Activated T-helper 2 cell treated with anti-CD3 and anti-CD28 coated beads, Interferon-gamma antibody, Interleukin-2, Interleukin-4, amounts not matched to agents 10 μg/mL and 5 μg/mL and 100 μg/mL, durations not matched to agents 14 hours and 24 hours and 36 hours (primary cell): ENCODE measurements at regions of chr3 and their contacts with region 1.

Region 1: GRCh38 chr3:133573054-133573628 is 345 bp upstream of the CDV3 start:
- DNase-seq: peak; percentile 100
- H3K4me3 Mint-ChIP-seq: peak overlapping the region; percentile 89
- H3K27ac Mint-ChIP-seq: peak overlapping the region; percentile 100
- H3K4me1 Mint-ChIP-seq: peaks cover 40% of the 10 kb centered on the region
- H3K27me3 Mint-ChIP-seq: no peaks in the 10 kb centered on the region

Region 2: DNA sequence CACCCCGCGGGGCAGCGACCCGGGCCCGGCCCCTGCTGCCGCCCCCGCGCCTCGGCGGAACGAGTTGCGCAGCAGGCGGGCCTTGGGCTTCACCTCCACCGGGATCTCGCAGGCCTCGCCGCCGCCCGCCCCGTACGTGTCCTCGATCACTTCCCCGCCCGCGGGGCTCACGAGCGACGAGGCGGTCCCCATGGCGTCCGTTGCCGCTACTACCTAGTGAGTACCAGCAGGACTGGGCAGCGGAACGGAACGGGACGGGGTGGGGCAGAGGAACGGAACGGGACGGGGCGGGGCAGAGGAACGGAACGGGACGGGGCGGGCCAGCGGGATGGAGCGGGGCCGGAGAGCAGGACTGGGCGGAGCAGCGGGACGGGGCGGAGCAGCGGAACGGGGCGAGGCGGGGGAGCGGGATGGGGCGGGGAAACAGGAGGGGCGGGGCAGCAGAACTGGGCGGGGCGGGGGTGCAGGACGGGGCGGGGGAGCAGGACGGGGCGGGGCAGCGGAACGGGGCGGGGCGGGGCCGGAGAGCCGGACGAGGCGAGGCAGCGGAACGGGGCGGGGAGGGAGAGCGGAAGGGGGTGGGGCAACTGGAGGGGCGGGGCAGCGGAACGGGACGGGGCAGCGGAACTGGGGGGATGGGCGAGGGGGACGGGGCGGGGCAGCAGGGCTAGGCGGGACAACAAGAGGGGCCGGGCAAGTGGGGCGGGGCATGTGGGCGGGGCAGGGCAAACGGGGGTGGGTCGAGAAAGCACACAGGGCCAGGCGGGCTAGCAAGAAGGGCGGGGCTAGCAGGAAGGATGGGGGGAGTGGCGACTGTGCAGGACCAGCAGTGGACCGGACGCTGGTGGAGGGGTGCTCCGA is 850.7 kb before region 1 on chr3 and contains the start of gene NPHP3:
- intact Hi-C with region 1: loop called (anchors 1 kb)
- DNase-seq: peak; percentile 87
- H3K4me3 Mint-ChIP-seq: peak within 1 kb of the TSS; percentile 91
- H3K27ac Mint-ChIP-seq: peak within 1 kb of the TSS; percentile 87
- H3K4me1 Mint-ChIP-seq: peaks cover 30% of the 10 kb centered on the region
- H3K27me3 Mint-ChIP-seq: no peaks in the 10 kb centered on the region
- total RNA-seq, gene NPHP3: 16.1 and 20.5 TPM in 2 replicates

Region 3: GRCh38 chr3:133448478-133449122 is 124.5 kb before region 1 on chr3:
- intact Hi-C with region 1: loop called (anchors 1 kb)
- DNase-seq: peak; percentile 34
- H3K4me3 Mint-ChIP-seq: peak overlapping the region; percentile 39
- H3K27ac Mint-ChIP-seq: peak overlapping the region; percentile 76
- H3K4me1 Mint-ChIP-seq: peaks cover 35% of the 10 kb centered on the region
- H3K27me3 Mint-ChIP-seq: no peaks in the 10 kb centered on the region

Region 4: DNA sequence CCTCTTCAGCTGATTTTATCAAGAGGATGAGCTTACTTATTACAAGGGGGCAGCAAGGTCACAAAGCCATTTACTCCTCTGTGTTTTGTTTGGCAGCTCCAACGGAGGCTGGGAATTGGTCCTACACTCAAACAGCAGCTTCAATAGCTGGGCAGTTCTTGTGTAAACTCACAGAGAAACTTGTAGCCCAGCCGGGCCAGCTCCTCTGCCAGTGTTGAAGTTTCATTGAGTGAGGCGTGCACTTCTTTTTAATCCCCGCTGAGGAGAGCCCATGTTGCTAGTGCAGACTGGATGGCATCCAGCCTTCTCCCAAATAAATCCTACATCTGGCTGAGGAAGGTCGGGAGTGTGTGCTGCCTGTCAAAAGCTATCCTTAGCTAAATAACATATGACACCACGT is 113.7 kb before region 1 on chr3:
- intact Hi-C with region 1: no loop called
- DNase-seq: no peak
- H3K4me3 Mint-ChIP-seq: no peak overlapping the region
- H3K27ac Mint-ChIP-seq: no peak overlapping the region
- H3K4me1 Mint-ChIP-seq: peaks cover 30% of the 10 kb centered on the region
- H3K27me3 Mint-ChIP-seq: no peaks in the 10 kb centered on the region

Region 5: DNA sequence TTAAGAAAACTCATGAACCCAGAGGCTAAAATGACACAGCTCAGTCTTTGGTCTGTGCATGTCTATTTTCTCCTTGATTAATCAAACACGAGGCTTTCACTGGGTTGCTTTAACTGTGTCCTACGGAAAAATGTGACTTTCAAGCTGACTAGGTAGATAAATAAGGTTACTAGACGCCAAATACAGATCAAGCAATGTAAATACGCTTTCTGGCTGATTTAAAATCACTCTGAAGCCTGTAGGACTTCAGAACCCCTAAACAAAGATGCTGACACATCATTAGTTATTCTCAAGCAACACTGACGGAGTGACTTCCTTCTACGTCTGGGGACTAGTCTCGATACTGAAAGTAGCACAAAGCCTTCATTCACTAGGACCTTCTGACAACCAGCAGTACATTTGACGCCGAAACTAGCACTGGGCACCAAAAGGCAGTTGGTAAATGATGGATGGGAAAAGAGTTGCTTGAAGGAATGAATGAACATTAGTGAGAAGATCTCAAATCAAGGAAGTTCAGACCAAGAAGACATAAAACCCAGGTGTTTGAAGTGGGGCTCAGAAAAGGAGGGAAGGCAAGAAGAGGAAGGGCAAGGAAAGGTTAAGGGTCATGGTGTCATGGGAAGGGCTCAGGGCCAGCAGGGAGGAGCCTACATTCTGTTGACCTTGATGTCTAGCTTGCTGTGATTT is 66.8 kb before region 1 on chr3:
- intact Hi-C with region 1: loop called (anchors 1 kb)
- DNase-seq: peak; percentile 35
- H3K4me3 Mint-ChIP-seq: peak overlapping the region; percentile 35
- H3K27ac Mint-ChIP-seq: peak overlapping the region; percentile 89
- H3K4me1 Mint-ChIP-seq: peaks cover 19% of the 10 kb centered on the region
- H3K27me3 Mint-ChIP-seq: no peaks in the 10 kb centered on the region

Region 6: DNA sequence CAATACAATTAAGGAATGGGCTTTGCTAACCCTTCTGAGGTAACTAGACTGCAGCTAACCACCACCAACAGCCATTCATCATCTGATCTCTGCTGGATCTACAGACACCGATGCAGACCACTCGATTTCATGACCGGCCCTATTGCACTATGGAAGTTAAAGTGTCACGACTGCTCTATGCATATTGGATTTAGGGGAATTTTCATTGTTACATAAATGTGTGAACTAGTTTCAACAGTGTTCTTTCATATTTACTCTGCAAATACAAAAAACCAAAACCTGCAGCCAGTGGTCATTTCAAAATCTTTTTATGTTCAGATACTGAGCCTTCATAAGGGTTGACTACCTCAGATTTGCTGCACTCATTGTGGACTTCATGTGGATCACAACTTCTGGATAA is 14.9 kb after region 1 on chr3:
- intact Hi-C with region 1: no loop called
- DNase-seq: no peak
- H3K4me3 Mint-ChIP-seq: no peak overlapping the region
- H3K27ac Mint-ChIP-seq: no peak overlapping the region
- H3K4me1 Mint-ChIP-seq: peaks cover 20% of the 10 kb centered on the region
- H3K27me3 Mint-ChIP-seq: no peaks in the 10 kb centered on the region

Region 7: GRCh38 chr3:133661454-133662277 is 88.5 kb after region 1 on chr3 and contains the start of gene TOPBP1:
- intact Hi-C with region 1: loop called (anchors 1 kb)
- DNase-seq: peak; percentile 86
- H3K4me3 Mint-ChIP-seq: peak within 1 kb of the TSS; percentile 99
- H3K27ac Mint-ChIP-seq: peak within 1 kb of the TSS; percentile 97
- H3K4me1 Mint-ChIP-seq: peaks cover 33% of the 10 kb centered on the region
- H3K27me3 Mint-ChIP-seq: no peaks in the 10 kb centered on the region
- total RNA-seq, gene TOPBP1: 90.6 and 91.2 TPM in 2 replicates

Region 8: GRCh38 chr3:134250717-134251220 is 677.6 kb after region 1 on chr3 and contains the start of gene RYK:
- intact Hi-C with region 1: loop called (anchors 2 kb)
- DNase-seq: peak; percentile 63
- H3K4me3 Mint-ChIP-seq: peak within 1 kb of the TSS; percentile 87
- H3K27ac Mint-ChIP-seq: peak within 1 kb of the TSS; percentile 77
- H3K4me1 Mint-ChIP-seq: peaks cover 40% of the 10 kb centered on the region
- H3K27me3 Mint-ChIP-seq: peaks cover 44% of the 10 kb centered on the region
- total RNA-seq, gene RYK: 15.8 and 18.4 TPM in 2 replicates